ENCODE measurements at regions of chr1 and their contacts with region 1.

Region 1: GRCh38 chr1:192808518-192809306 is at the start of gene RGS2:
- DNase-seq: peak; percentile 89
- H3K4me3 Mint-ChIP-seq: peak within 1 kb of the TSS; percentile 98
- H3K27ac Mint-ChIP-seq: peak within 1 kb of the TSS; percentile 83
- H3K4me1 Mint-ChIP-seq: peaks cover 39% of the 10 kb centered on the region
- H3K27me3 Mint-ChIP-seq: peaks cover 7% of the 10 kb centered on the region
- total RNA-seq, gene RGS2: 8.0 to 8.2 TPM

Region 2: DNA sequence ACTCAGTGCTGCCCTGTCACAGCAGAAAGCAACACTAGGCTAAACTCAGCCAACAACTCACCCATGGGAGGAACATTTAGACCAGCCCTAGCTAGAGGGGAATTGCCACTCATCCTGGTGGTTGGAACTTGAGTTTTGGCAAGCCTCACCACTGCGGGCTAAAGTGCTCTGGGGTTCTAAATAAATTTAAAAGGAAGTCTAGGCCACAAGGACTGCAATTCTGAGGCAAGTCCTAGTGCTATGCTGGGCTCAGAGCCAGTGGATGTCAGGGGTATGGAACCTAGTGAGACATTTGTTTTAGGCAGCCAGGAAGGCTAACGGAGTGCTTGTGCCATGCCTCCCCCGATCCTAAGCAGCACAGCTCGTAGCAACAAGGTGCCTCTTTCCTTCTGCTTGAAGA is 94.8 kb before region 1 on chr1:
- CTCF ChIA-PET with region 1: no interaction called
- POLR2A ChIA-PET with region 1: no interaction called
- DNase-seq: no peak
- H3K4me3 Mint-ChIP-seq: no peak overlapping the region
- H3K27ac Mint-ChIP-seq: no peak overlapping the region
- H3K4me1 Mint-ChIP-seq: no peaks in the 10 kb centered on the region
- H3K27me3 Mint-ChIP-seq: peaks cover 7% of the 10 kb centered on the region

Region 3: DNA sequence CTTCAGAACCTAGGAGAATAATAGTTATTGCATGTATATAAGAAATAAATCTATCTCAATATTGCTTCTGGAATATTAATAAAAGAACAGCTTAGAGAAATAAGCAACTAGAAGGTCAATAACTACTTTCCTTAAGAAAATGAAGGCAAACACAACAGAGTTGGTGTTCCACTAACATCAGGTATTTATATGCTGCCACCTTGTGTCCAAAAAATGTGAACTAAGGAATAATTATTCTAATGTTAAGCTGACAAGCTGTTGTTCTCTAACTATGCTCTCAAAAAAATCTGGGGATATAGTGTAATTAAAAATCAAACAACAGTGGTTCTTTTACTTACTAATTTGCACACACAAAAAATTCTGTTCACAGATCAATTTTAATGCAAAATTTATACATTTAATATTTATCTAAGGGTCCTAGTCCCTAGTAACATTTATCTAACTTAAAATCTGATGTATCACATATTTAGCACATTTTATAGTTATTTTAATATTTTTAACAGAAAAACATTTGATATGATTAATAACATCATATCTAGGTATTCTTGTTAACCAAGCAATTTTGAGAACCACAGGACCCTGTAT is 210.8 kb after region 1 on chr1:
- CTCF ChIA-PET with region 1: interaction called, 74 read pairs
- POLR2A ChIA-PET with region 1: interaction called, 4 read pairs
- DNase-seq: no peak
- H3K4me3 Mint-ChIP-seq: no peak overlapping the region
- H3K27ac Mint-ChIP-seq: no peak overlapping the region
- H3K4me1 Mint-ChIP-seq: no peaks in the 10 kb centered on the region
- H3K27me3 Mint-ChIP-seq: no peaks in the 10 kb centered on the region

Region 4: GRCh38 chr1:193030280-193030679 is 221.6 kb after region 1 on chr1:
- CTCF ChIA-PET with region 1: interaction called, 6 read pairs
- POLR2A ChIA-PET with region 1: interaction called, 11 read pairs
- DNase-seq: no peak
- H3K4me3 Mint-ChIP-seq: no peak overlapping the region
- H3K27ac Mint-ChIP-seq: no peak overlapping the region
- H3K4me1 Mint-ChIP-seq: peaks cover 5% of the 10 kb centered on the region
- H3K27me3 Mint-ChIP-seq: no peaks in the 10 kb centered on the region